Upper lobe of right lung (tissue), 1 donor: ENCODE measurements at regions of chr3 and their contacts with region 1.

Region 1: GRCh38 chr3:119676771-119677640 is at the start of gene COX17:
- DNase-seq: peak; percentile 97
- ATAC-seq: peak; percentile 96
- H3K4me3 ChIP-seq: peak within 1 kb of the TSS; percentile 69
- H3K27ac ChIP-seq: peak within 1 kb of the TSS; percentile 95
- H3K4me1 ChIP-seq: peaks cover 10% of the 10 kb centered on the region
- H3K27me3 ChIP-seq: no peaks in the 10 kb centered on the region
- CTCF ChIP-seq: no peak
- total RNA-seq, gene COX17: 48.9 TPM

Region 2: GRCh38 chr3:119598410-119599098 is 78.5 kb before region 1 on chr3:
- intact Hi-C with region 1: loop called (anchors 10 kb)
- DNase-seq: no peak
- ATAC-seq: no peak
- H3K4me3 ChIP-seq: peak overlapping the region; percentile 18
- H3K27ac ChIP-seq: peak overlapping the region; percentile 72
- H3K4me1 ChIP-seq: peaks cover 21% of the 10 kb centered on the region
- H3K27me3 ChIP-seq: no peaks in the 10 kb centered on the region
- CTCF ChIP-seq: no peak